AG04449 (cell line): ENCODE measurements at regions of chr5 and their contacts with region 1.

Region 1: DNA sequence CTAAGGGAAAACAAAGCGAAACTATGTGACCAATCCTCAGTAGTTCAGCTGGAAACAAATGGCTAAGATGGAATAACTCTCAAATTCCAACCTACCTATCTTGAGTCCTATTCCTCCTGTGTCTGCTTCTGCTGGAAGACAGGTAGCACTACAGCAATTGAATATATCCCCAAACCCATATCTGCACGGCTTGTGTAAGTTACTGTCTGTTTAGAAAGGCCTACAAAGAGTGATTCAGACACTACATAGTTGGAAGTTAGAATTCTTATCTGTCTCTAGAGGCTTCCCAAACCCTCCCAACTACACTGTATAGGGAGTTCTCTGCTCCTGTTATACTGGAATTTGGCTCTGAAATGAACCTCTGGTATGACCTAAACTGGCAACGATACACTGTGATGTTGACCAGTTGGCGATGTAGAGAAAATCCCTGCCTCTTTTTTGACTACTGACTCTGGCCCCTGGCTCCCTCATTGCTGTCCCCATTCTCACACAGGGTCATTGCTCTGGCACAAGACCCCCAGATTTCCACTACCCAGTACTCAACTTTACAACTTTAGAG is 22.6 kb upstream of the NADK2 start:
- DNase-seq: no peak
- H3K4me3 ChIP-seq: no peak overlapping the region
- CTCF ChIP-seq: no peak

Region 2: GRCh38 chr5:36060420-36060887 is 203.8 kb before region 1 on chr5:
- CTCF ChIA-PET with region 1: no interaction called
- POLR2A ChIA-PET with region 1: no interaction called
- DNase-seq: no peak
- H3K4me3 ChIP-seq: no peak overlapping the region; the same call in 1 of the 2 replicates
- CTCF ChIP-seq: peak; percentile 12

Region 3: DNA sequence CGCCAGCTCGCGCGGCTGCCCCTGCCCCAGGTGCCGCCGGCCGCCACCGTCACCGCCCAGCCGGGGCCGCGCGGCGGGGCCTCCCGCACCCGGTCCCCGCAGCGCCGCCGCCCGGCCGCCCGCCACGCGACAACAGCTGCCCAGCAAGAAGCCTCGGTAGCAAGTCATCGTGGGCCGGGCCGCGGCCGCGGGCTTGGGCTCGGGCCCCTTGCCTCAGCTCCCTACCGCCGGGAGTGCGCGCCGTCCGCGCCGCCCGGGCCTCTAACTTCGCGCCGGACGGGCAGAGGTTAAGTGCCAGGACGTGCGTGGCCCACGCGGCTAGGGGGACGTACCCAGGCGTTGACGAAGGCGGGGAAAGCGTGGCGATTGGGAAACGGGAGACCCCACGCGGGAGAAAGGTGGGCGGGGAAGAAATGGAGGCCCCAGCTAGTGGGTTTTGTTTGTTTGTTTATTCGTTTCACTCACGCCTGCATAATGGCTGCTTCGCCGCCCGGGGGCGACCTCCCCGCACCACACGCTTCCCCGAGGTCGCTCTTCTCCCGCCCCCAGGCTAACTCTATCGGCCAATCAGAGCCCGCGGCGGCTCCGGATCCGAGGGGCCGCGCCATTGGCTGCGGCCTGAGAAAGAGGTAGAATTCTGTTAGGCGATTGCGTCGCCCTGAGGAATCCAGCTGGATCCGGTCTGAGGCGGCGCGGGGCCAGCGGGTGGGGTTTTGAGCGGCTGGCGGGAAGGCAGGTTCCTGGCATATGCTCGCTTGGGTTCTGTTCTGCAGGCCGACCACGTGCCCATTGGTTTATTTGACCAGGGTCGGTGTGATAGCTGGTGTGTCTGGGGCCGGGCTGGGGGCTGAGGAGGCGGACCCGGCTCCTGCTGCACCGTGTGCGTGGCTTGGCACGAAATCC is 22.4 kb before region 1 on chr5 and contains the start of gene NADK2:
- CTCF ChIA-PET with region 1: interaction called, 26 read pairs
- POLR2A ChIA-PET with region 1: interaction called, 3 read pairs
- DNase-seq: peak; percentile 71
- H3K4me3 ChIP-seq: peak within 1 kb of the TSS; percentile 78
- CTCF ChIP-seq: peak; percentile 68

Region 4: DNA sequence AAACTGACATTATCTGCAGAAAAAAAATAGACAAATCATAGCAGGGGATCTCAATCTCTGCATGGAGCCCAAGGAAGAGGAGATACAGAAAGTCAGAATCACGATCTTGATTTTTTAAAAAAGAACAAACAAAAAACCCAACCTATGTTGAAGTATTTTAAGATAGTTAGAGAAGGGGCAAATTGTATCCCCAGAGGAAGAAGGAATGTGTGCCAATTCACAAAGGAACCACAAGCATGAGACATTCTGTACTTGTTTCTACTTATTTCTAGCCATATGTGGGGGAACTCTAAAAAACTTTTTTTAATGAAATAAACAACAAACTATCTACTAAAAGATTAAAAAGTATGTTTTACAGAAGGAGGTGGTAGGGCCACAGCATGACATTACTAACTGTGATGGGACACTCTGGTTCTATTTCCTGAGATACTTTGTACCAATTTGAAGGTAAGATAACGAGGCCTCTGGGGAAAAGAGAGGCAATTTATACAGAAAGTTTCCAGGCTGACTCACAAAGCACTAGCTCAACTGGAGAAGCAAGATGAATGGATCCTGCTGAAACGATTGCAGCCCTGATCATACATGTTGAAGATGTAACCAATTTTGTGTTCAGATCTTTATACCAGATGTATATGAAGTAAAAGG is 14.9 kb after region 1 on chr5:
- CTCF ChIA-PET with region 1: interaction called, 55 read pairs
- POLR2A ChIA-PET with region 1: no interaction called
- DNase-seq: no peak
- H3K4me3 ChIP-seq: no peak overlapping the region
- CTCF ChIP-seq: no peak

Region 5: DNA sequence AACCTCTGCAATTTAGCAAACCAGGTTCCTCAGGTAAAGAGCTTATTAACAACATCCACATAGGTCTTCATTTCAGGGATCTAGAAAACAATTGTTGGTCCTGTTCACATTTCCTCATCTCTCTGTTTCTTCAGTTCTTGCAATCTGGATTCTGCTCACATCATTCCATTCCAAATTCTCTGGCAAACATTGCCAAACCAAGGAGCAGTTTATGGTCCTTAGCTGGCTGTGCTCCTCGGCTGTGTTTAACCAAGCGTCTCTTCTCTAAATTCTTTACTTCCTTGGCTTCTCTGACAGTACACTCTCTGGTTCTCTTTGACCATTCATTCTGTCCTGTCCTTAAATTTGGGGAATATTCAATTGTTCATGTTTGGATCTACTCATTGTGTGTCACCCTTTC is 103.2 kb after region 1 on chr5:
- CTCF ChIA-PET with region 1: no interaction called
- POLR2A ChIA-PET with region 1: no interaction called
- DNase-seq: peak; percentile 19
- H3K4me3 ChIP-seq: no peak overlapping the region
- CTCF ChIP-seq: no peak

Region 6: GRCh38 chr5:36389245-36389644 is 125.0 kb after region 1 on chr5:
- CTCF ChIA-PET with region 1: interaction called, 39 read pairs
- POLR2A ChIA-PET with region 1: no interaction called
- DNase-seq: no peak
- H3K4me3 ChIP-seq: no peak overlapping the region
- CTCF ChIP-seq: no peak

Region 7: GRCh38 chr5:36414869-36415282 is 150.6 kb after region 1 on chr5:
- CTCF ChIA-PET with region 1: interaction called, 15 read pairs
- POLR2A ChIA-PET with region 1: no interaction called
- DNase-seq: no peak
- H3K4me3 ChIP-seq: no peak overlapping the region
- CTCF ChIP-seq: peak; percentile 20